Sciatic nerve (tissue), 2 donors: ENCODE measurements at regions of chr1 and their contacts with region 1.

Region 1: DNA sequence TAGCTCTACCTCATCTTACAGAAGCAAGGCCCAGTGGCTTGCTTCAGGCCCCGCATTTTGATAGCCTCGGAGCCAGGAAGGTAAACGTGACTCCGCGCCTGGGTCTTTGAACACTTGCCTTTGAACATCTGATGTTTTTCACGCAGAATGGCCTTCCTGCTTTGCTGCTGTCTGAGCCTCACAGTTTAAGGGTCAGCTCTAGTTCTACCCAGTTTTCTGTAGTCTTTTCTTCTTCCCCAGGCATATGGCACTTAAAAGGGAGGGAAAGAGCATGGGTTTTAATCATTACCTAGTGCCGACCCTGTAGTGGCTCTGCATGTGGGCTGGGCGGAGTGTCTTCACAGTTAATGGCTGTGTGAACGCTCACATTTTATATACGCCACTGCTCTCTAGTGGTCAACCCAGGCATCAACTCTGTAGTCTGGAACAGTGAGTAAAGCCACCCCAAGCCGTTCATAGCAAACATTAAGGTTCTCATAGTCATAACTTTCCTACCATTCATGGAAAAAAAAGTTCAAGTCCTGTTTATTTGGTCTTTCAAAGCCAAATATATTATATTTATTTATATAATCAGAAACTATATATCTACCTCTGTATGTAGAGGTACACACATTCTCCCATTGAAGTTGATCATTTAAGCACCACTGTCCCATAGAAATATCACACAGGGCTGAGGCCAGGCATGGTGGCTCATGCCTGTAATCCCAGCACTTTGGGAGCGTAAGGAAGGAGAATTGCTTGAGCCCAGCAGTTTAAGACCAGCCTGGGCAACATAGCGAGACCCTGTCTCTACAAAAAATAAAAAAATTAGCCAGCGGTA is 78.1 kb downstream of the IER5 start:
- DNase-seq: peak; percentile 74
- ATAC-seq: peak; percentile 97

Region 2: DNA sequence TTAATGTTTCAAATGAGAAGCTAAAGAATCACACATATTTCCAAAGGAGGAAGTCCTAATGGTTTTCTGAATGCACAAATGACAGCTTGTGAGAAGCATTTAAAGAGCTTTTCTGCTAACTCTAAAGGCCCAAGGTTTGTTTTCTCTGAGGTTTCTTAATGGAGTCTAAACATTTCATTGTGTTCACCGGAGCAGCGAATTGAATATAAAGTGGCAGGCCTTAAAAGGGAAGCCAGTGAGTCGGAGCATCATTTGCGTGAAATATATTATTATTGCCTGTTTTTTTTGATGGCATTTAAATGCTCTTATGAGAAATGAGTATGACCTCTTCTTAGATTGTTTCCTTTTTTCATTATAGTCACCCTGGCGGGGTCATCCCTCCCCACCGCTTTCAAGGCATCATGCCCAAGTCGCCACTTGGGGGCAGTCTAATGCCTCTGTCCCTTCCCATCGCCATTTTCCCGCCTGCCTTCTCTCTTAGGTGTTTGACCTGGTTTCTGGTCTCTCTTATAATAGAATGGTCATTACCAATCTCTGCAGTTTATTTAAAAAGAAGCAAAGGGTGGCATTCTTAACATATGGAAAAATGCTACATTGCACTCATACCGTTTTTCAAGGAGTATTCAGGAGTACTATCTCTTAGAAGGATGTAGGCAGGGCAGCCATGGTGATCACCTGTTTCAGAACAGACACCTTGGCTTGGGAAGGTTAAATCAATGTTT is 633.2 kb before region 1 on chr1:
- intact Hi-C with region 1: loop called (anchors 10 kb)
- DNase-seq: peak; percentile 79
- ATAC-seq: peak; percentile 79

Region 3: DNA sequence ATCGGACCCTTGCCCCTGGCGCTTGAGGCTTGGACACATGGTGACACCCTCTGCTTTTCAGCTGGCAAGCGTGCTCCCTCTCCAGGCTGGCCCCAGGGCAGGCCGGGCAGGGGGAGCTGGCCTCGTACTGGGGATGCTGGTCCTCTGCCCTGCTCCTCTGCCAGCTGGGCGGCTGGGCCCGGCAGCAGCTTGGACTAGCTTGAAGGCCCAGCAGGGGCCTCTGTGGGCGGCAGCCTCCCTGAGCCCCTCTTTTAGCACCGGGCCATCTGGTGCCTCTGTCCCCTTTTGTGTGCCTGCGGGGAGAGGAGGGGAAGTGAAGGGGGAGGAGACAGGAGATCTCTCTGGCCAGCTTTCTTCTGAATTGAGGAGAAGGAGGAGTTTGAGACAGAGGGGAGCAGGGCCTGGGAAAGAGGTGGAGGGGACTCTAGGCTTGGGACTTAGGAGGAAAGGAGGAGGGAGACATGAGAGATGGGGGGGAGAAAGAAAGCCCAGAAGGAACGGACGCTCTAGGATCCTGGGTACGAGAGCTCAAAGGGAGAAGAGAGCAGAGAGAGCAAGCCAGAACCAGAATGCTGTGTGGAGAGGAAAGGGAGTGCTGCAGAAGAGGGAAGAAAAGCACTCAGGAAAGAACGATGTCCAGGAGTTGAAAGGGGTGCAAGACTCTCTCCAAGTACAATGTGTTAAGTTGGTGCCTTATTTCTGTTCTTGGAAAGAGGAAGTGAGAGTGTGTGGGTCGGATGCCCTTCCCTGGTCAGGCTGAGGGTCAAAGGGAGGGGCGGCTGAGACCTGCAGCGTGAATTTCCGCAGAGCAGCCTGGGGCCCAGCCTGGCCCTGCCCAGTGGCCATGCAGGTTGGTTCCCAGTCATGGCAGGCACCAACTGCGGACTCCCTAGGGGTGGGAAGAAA is 37.7 kb before region 1 on chr1:
- intact Hi-C with region 1: loop called (anchors 2 kb)
- DNase-seq: no peak
- ATAC-seq: peak; percentile 47

Region 4: GRCh38 chr1:181239086-181239485 is 72.5 kb after region 1 on chr1:
- intact Hi-C with region 1: no loop called
- DNase-seq: no peak
- ATAC-seq: no peak